ENCODE measurements at regions of chr10 and their contacts with region 1.

Region 1: DNA sequence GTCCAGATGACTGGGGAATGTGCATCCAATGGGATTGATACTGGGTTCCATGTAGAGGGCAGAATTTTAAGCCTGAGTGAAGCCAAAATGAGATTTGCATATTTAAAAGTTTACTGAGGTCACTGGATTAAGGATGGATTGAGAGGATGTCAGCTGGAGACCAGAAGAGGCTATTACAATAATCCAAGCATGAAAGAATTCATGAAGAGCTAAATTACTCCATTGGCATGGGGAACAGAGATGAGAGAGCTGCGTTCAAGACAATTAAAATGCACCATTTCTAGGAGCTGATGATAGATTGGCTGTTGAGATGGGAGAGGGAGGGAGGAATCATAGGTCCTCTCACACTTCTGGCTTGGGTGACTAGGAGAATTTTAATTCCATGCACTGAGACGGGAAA is 158.5 kb downstream of the JCAD start:
- DNase-seq: no peak

Region 2: GRCh38 chr10:29784175-29784773 is 116.6 kb before region 1 on chr10:
- CTCF ChIA-PET with region 1: interaction called, 11 read pairs
- POLR2A ChIA-PET with region 1: no interaction called
- DNase-seq: peak; percentile 16

Region 3: GRCh38 chr10:29881336-29881771 is 19.5 kb before region 1 on chr10:
- CTCF ChIA-PET with region 1: no interaction called
- POLR2A ChIA-PET with region 1: no interaction called
- DNase-seq: no peak

Region 4: DNA sequence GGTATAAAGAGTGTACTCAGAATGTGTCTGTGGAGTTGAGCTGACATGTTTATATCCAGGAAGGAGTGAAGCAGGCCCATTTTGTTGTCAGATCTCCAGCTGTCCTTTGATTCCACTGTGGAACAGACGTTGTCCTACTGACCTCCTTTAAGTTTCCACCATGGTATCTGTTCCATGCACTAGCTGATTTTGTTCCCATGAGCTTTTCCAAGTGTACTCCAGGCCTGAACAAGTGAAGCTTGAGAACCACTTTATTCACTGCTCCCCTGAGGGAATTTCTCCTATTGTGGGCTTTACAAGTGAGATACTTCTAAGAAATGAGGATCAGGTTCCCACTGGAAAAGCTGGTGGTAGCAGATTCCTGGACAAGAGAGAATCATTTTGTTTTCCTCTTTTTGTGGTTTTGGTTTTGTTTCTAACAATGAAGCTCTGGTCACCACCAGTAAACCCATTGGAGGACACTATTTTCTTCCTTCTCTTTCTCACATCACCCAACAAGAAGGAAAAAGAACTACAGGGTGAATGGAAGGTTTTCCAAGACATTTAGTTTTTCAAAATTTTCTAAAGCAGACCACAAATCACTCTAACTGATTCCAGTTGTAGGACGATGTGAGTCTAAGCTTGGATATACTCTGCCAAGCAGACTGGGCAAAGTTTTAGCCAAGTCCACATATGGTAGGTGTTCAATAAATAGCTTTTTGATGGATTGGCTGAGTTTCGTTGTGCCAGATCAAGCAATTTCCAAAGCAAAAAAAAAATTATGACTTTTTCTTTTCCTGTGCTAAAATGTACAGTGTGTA is 14.3 kb after region 1 on chr10:
- CTCF ChIA-PET with region 1: no interaction called
- POLR2A ChIA-PET with region 1: no interaction called
- DNase-seq: no peak

Measured in HEK293T (cell line).